H1 (cell line): ENCODE measurements at regions of chr10 and their contacts with region 1.

Region 1: GRCh38 chr10:86945361-86946212 is 11.8 kb downstream of the MMRN2 start:
- DNase-seq: peak; percentile 53 to 80
- H3K4me3 ChIP-seq: no peak overlapping the region
- H3K27ac ChIP-seq: no peak overlapping the region
- H3K4me1 ChIP-seq: peaks cover 2 to 5% (median 3%) of the 10 kb centered on the region in 4 experiments; a peak in 6 of 7 replicates
- H3K27me3 ChIP-seq: no peaks in the 10 kb centered on the region; a peak in 2 of 7 replicates
- CTCF ChIP-seq: peak; percentile 91 to 93 (median 93)
- EP300 ChIP-seq: no peak
- POLR2A ChIP-seq: no peak
- RAD21 ChIP-seq: peak; percentile 87 to 88

Region 2: DNA sequence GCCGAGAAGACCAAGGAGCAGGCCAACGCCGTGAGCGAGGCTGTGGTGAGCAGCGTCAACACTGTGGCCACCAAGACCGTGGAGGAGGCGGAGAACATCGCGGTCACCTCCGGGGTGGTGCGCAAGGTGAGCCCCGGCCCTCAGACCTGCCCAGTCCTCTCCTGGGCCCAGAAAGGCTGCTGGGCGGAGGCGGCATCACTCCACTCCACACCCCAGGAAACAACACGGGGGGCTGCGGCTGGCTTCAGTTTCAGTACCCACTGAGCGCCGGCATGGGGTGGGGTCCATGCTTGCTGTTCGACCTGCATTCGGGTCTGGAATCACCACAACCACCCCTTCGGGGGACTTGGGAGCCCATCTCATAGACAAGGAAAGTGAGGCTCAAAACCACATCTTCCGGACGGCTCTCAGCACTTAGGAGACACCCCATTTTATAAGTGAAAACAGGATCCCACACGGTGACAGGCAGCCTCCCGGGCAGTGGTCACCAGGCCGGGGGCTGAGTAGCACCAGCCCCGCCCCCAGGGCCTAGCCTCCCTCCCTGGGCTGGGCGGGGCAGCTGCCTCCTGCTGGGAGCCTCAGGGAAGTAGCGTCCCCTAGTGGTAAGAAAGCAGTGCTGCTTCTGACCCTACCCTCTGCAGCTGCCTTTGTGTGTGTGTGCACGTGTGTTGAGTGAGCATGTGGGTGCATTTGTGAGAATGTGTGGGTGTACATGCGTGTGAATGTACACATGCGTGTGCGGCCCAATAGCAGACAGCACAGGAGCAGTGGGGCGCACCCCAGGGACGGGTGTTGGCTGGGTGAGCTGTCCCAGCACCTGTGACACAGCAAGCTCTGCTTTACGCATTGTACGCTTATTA is 14.6 kb after region 1 on chr10:
- CTCF ChIA-PET with region 1: interaction called, 975 read pairs
- POLR2A ChIA-PET with region 1: interaction called, 38 read pairs
- DNase-seq: peak in 1 of 2 experiments; percentile 81
- H3K4me3 ChIP-seq: no peak overlapping the region
- H3K27ac ChIP-seq: no peak overlapping the region; the same call in 1 of the 2 replicates
- H3K4me1 ChIP-seq: peaks cover 15 to 47% (median 34%) of the 10 kb centered on the region in 4 experiments
- H3K27me3 ChIP-seq: no peaks in the 10 kb centered on the region
- CTCF ChIP-seq: peak in 2 of 3 experiments; percentile 96 to 100; a peak in 3 of 4 replicates
- EP300 ChIP-seq: no peak
- POLR2A ChIP-seq: no peak
- RAD21 ChIP-seq: peak; percentile 86 to 90

Region 3: DNA sequence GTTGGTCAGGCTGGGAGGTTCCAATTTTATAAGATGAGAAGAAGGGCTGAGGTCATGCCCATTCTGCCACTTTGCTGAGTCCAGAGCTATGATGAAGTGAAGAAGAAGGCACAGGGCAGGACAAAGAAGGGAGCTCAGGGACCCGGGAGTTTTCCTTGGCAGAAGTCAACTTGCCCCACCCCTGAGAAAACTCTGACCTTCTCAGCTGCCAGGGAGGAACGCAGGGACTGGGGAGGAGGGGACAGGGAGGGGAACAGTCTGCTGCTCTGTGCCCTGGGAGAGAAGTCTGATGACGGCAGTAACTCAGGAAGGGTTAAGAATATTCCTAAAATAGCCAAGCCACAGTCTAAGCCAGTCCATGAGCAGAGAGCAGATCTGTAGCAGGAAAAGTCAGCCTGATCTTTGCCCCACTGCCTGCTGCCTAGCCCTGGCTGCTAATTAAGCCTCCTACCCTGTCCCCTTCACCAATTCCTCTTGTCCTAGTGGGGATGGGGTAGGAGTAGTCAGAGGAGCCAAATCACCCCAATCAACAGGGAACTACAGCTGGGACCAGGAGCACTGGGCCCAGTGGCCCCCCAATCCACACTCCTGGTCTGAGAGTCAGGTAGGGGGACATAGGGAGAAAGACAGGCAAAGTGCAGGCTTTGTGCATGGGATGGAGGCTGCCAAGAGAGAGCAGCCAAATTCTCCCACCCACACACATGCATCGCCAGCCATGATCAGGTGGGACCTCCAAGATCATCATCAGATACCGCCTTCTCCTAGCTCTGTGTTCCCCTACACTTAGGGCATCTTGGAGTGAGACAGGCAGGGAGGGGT is 34.6 kb after region 1 on chr10:
- CTCF ChIA-PET with region 1: interaction called, 12 read pairs
- POLR2A ChIA-PET with region 1: interaction called, 3 read pairs
- DNase-seq: no peak
- H3K4me3 ChIP-seq: no peak overlapping the region
- H3K27ac ChIP-seq: no peak overlapping the region
- H3K4me1 ChIP-seq: peaks cover 0 to 2% (median 0%) of the 10 kb centered on the region in 4 experiments; a peak in 1 of 7 replicates
- H3K27me3 ChIP-seq: no peaks in the 10 kb centered on the region
- CTCF ChIP-seq: no peak
- EP300 ChIP-seq: no peak
- POLR2A ChIP-seq: no peak
- RAD21 ChIP-seq: no peak

Region 4: GRCh38 chr10:86992451-86992850 is 46.9 kb after region 1 on chr10:
- CTCF ChIA-PET with region 1: interaction called, 11 read pairs
- POLR2A ChIA-PET with region 1: no interaction called
- DNase-seq: no peak
- H3K4me3 ChIP-seq: no peak overlapping the region
- H3K27ac ChIP-seq: no peak overlapping the region
- H3K4me1 ChIP-seq: no peaks in the 10 kb centered on the region
- H3K27me3 ChIP-seq: no peaks in the 10 kb centered on the region
- CTCF ChIP-seq: no peak
- EP300 ChIP-seq: no peak
- POLR2A ChIP-seq: no peak
- RAD21 ChIP-seq: no peak